HEK293 (cell line): ENCODE measurements at regions of chr4 and their contacts with region 1.

Region 1: DNA sequence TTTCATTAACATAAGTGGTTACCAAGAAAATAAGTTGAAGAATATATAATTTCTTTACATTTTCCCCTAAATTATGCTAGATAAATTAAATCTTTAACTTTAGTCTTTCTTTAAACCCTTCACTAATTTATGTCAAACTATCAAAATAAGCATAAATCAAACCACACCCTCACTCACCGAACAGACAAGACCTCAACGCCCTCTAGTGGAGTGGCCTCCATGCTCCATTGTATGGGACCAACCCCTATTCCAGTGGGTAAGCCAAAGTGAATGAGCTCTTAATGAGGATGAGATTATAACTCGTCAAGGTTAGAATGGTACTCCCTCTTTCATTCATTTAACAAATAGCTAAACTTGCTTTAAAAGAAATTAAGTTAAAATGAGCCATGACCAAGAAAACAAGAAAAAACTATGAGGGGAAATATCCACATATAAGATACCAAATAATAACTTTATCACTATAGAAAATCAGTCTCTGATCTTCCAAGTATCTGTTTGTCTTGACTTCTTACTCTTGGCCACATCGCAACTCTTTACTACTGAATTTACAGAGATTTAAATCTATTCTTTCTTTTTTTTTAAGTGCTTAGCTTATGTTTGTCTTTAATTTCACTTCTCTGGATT is 15.6 kb upstream of the BBS12 start:
- H3K4me3 ChIP-seq: no peak overlapping the region
- H3K27ac ChIP-seq: no peak overlapping the region
- H3K4me1 ChIP-seq: no peaks in the 10 kb centered on the region
- CTCF ChIP-seq: peak; percentile 26; the same call in 1 of the 2 replicates

Region 2: GRCh38 chr4:122434285-122434684 is 282.7 kb before region 1 on chr4:
- CTCF ChIA-PET with region 1: interaction called, 10 read pairs
- POLR2A ChIA-PET with region 1: no interaction called
- H3K4me3 ChIP-seq: no peak overlapping the region
- H3K27ac ChIP-seq: no peak overlapping the region
- H3K4me1 ChIP-seq: no peaks in the 10 kb centered on the region
- CTCF ChIP-seq: no peak

Region 3: GRCh38 chr4:122469457-122469856 is 247.5 kb before region 1 on chr4:
- CTCF ChIA-PET with region 1: no interaction called
- POLR2A ChIA-PET with region 1: no interaction called
- H3K4me3 ChIP-seq: no peak overlapping the region
- H3K27ac ChIP-seq: no peak overlapping the region
- H3K4me1 ChIP-seq: no peaks in the 10 kb centered on the region
- CTCF ChIP-seq: no peak

Region 4: GRCh38 chr4:122898370-122899150 is 181.6 kb after region 1 on chr4:
- CTCF ChIA-PET with region 1: no interaction called
- POLR2A ChIA-PET with region 1: no interaction called
- H3K4me3 ChIP-seq: no peak overlapping the region
- H3K27ac ChIP-seq: no peak overlapping the region
- H3K4me1 ChIP-seq: no peaks in the 10 kb centered on the region
- CTCF ChIP-seq: no peak